Activated CD4-positive, alpha-beta memory T cell treated with anti-CD3 and anti-CD28 coated beads for 36 hours (primary cell): ENCODE measurements at regions of chr3 and their contacts with region 1.

Region 1: GRCh38 chr3:129249276-129250065 is at the start of gene COPG1:
- DNase-seq: peak; percentile 92
- H3K4me3 Mint-ChIP-seq: peak within 1 kb of the TSS; percentile 89
- H3K27ac Mint-ChIP-seq: peak within 1 kb of the TSS; percentile 93
- H3K4me1 Mint-ChIP-seq: peaks cover 38% of the 10 kb centered on the region
- H3K27me3 Mint-ChIP-seq: no peaks in the 10 kb centered on the region
- total RNA-seq, gene COPG1: 154 to 162 TPM

Region 2: DNA sequence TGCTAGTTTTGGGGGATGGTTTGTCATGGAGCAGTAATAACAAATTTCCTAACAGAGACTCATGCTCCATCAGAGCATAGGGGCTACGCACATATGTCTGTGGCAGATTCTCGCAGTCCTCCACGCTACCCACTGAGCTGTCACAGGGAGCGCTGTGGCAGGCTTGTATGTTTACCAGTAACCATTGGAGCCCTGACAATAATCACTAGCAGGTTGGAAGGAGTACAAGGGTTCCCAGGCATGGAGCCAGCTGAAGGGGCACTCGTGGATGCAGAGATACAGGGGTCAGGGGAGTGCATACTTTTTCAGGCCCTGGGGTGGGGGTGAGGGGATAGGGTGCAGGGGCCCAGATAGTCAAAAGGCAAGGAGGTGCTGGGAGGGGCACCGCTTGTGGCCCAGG is 196.8 kb before region 1 on chr3:
- CTCF ChIA-PET with region 1: interaction called, 113 read pairs
- POLR2A ChIA-PET with region 1: interaction called, 12 read pairs
- intact Hi-C with region 1: loop called (anchors 1 kb)
- DNase-seq: no peak
- H3K4me3 Mint-ChIP-seq: no peak overlapping the region
- H3K27ac Mint-ChIP-seq: no peak overlapping the region
- H3K4me1 Mint-ChIP-seq: peaks cover 8% of the 10 kb centered on the region
- H3K27me3 Mint-ChIP-seq: no peaks in the 10 kb centered on the region

Region 3: DNA sequence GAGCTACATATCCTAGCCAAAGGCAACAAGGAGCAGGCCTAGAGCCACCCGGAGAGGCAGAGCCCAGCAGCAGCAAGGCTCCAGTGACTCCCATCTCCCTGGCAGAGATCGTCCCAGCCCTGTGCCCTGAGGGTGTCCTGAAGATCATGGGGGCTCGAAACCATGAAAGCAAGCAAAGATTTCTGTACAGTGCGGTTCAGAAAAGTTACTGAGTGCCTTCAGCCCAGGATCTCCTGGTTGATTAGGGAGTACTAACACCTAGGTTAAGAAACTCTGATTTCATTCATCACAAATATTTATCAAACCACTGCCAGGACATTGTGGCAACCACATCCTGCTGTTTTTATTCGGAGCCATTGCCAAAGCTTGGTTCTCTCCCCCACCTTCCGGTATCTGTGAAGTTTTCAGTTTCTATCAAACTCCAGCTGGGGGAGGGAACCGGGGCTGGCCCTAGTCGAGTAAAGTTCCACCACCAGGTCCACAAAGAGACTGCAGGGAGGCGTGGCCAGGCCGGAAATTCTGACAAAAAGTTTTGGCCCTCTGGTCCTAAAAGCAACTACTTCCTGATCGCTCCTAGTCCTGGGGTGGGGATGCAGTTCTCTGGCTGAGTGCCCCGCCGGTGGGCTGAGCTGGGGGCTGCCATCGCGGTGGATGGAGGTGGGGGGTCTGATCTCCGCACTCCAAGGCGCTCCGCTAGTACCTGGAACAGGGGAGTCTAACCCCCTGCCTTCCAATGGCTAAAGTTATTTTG is 129.0 kb before region 1 on chr3:
- CTCF ChIA-PET with region 1: interaction called, 24 read pairs
- POLR2A ChIA-PET with region 1: interaction called, 17 read pairs
- intact Hi-C with region 1: loop called (anchors 1 kb)
- DNase-seq: peak; percentile 97
- H3K4me3 Mint-ChIP-seq: peak overlapping the region; percentile 92
- H3K27ac Mint-ChIP-seq: peak overlapping the region; percentile 98
- H3K4me1 Mint-ChIP-seq: peaks cover 43% of the 10 kb centered on the region
- H3K27me3 Mint-ChIP-seq: no peaks in the 10 kb centered on the region

Region 4: DNA sequence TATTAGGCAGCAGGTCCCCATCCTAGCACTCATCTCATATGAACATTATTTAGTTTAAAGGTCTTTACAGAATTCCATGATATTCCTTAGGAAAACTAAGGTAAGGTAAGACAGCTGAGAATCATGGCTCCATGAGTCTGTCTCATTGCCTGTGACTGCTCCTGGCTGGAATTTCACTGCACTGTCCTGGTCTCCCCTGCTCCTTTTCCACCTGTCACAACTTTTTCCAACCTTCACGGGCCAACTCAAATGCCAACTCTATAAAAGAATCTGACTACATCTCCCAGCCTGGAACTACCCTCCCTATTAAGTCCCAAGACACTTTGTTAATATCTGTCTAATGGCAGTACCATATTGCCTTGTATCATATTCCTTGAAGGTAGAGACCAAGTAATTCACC is 73.4 kb before region 1 on chr3:
- CTCF ChIA-PET with region 1: interaction called, 23 read pairs
- POLR2A ChIA-PET with region 1: interaction called, 8 read pairs
- intact Hi-C with region 1: no loop called
- DNase-seq: no peak
- H3K4me3 Mint-ChIP-seq: peak overlapping the region; percentile 6
- H3K27ac Mint-ChIP-seq: peak overlapping the region; percentile 79
- H3K4me1 Mint-ChIP-seq: peaks cover 80% of the 10 kb centered on the region
- H3K27me3 Mint-ChIP-seq: no peaks in the 10 kb centered on the region

Region 5: DNA sequence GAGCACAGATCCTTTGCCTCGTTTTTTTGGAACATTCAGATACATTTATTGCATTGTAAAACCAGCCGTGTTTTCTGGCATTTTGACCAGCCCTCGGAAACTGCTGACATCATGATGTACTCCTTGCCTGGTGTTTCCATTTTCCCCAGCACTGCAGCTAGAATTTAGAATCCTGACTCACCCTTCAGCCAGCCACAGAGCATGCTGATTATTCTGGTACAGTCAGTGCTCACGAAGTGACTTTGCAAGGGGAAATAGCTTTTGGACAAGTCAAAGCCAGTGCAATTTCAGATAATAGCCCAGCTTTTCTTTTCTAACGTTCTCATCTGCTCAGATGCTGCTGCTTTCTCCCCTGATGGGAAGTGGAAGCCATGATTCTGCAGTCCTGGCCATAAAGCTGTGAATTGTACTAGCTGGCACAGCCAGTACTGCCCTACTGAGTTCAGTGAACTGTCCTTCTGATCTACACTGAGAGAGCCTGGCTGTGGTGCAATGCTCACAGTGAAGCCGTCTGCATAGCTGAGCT is 53.7 kb before region 1 on chr3:
- CTCF ChIA-PET with region 1: interaction called, 10 read pairs
- POLR2A ChIA-PET with region 1: interaction called, 3 read pairs
- intact Hi-C with region 1: no loop called
- DNase-seq: peak; percentile 37
- H3K4me3 Mint-ChIP-seq: no peak overlapping the region
- H3K27ac Mint-ChIP-seq: no peak overlapping the region
- H3K4me1 Mint-ChIP-seq: peaks cover 7% of the 10 kb centered on the region
- H3K27me3 Mint-ChIP-seq: no peaks in the 10 kb centered on the region

Region 6: DNA sequence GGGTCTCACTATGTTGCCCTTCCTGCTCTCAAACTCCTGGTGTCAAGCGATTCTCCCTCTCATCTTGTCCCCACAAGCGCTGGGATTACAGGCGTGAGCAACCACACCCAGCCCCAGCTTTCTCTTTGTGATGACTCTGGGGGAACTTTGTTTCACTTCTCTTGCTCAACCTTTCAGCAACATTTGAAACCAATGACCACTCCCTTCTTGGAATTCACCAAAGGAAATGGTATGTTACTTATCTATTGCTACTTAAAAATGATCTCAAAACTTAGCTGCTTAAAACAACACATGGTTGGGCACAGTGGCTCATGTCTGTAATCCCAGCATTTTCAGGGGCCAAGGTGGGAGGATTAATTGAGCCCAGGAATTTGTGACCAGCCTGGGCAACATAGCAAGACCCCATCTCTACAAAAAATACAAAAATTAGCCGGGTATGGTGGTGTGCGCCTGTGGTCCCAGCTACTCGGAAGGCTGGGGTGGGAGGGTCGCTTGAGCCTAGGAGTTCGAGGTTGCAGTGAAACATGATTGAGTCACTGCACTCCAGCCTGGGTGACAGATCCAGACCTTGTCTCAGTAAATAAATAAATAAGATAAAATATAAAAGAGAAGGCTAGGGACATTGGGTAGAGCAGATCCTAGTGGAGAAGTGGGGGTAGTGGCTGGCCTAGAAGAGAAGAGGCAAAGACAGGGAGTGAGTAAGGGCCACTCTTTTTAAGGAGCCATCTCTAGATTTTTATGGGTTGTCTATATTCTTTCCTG is 10.3 kb before region 1 on chr3:
- CTCF ChIA-PET with region 1: interaction called, 17 read pairs
- POLR2A ChIA-PET with region 1: interaction called, 4 read pairs
- intact Hi-C with region 1: loop called (anchors 1 kb)
- DNase-seq: peak; percentile 64
- H3K4me3 Mint-ChIP-seq: peak overlapping the region; percentile 15
- H3K27ac Mint-ChIP-seq: peak overlapping the region; percentile 81
- H3K4me1 Mint-ChIP-seq: peaks cover 20% of the 10 kb centered on the region
- H3K27me3 Mint-ChIP-seq: no peaks in the 10 kb centered on the region

Region 7: DNA sequence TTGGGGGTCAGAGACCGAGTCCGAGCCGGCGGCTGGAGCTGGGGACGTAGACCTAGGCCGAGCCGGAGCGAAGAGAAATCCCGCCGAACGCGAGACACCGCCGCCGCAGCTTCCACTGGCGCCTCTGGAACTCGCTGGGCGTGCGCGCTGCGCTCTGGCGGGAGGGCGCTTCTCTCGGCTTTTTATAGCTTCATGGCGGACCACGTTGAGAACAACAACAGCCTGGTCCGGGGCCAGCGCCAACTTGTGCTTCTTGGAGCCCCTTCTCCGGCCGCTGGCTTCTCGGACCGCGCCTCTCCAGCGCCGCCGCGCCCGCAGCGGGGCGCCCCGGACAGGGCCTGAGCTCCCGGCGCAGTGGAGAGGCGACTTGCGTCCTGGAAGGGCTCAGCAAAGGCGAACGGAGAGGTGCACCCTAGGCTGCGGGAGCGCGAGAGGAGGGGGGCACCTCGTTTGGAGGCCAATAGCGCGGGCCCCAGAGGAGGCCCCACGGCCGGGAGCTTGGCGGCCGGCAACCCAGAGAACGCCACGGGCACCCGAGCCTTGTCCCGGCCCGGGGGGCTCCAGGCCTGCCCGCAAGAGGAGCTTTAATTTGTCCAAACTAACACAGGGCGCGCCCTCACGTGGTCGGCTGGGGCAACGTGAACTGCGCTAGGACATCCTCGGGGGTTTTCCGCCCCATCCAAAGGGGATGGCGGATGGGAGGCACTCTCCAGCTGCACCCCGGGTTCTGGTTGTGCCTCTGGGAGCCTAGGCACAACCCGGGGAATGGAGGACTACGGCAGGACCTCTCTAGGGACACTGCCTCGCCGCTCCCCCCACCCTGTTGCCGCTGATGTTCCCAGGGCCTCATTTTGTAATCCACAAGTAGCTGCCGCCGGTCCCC is 66.9 kb after region 1 on chr3:
- CTCF ChIA-PET with region 1: interaction called, 11 read pairs
- POLR2A ChIA-PET with region 1: interaction called, 16 read pairs
- intact Hi-C with region 1: loop called (anchors 2 kb)
- DNase-seq: peak; percentile 90
- H3K4me3 Mint-ChIP-seq: peak overlapping the region; percentile 93
- H3K27ac Mint-ChIP-seq: peak overlapping the region; percentile 89
- H3K4me1 Mint-ChIP-seq: peaks cover 26% of the 10 kb centered on the region
- H3K27me3 Mint-ChIP-seq: no peaks in the 10 kb centered on the region

Region 8: GRCh38 chr3:129343643-129344332 is 94.3 kb after region 1 on chr3:
- CTCF ChIA-PET with region 1: no interaction called
- POLR2A ChIA-PET with region 1: no interaction called
- intact Hi-C with region 1: no loop called
- DNase-seq: peak; percentile 59
- H3K4me3 Mint-ChIP-seq: no peak overlapping the region
- H3K27ac Mint-ChIP-seq: no peak overlapping the region
- H3K4me1 Mint-ChIP-seq: peaks cover 5% of the 10 kb centered on the region
- H3K27me3 Mint-ChIP-seq: peaks cover 17% of the 10 kb centered on the region

Region 9: GRCh38 chr3:129608087-129608935 is 358.8 kb after region 1 on chr3:
- CTCF ChIA-PET with region 1: no interaction called
- POLR2A ChIA-PET with region 1: no interaction called
- intact Hi-C with region 1: no loop called
- DNase-seq: peak; percentile 19
- H3K4me3 Mint-ChIP-seq: no peak overlapping the region
- H3K27ac Mint-ChIP-seq: no peak overlapping the region
- H3K4me1 Mint-ChIP-seq: peaks cover 12% of the 10 kb centered on the region
- H3K27me3 Mint-ChIP-seq: peaks cover 14% of the 10 kb centered on the region